ENCODE measurements at regions of chr3 and their contacts with region 1.

Region 1: GRCh38 chr3:155995525-155996351 is 124.6 kb upstream of the KCNAB1 start:
- DNase-seq: peak in 1 of 2 experiments; percentile 54
- H3K4me3 ChIP-seq: no peak overlapping the region
- H3K27ac ChIP-seq: no peak overlapping the region
- H3K4me1 ChIP-seq: no peaks in the 10 kb centered on the region
- H3K27me3 ChIP-seq: no peaks in the 10 kb centered on the region
- CTCF ChIP-seq: peak; percentile 80

Region 2: GRCh38 chr3:155646128-155646527 is 349.6 kb before region 1 on chr3:
- CTCF ChIA-PET with region 1: no interaction called
- POLR2A ChIA-PET with region 1: no interaction called
- intact Hi-C with region 1: no loop called
- DNase-seq: no peak
- H3K4me3 ChIP-seq: no peak overlapping the region
- H3K27ac ChIP-seq: no peak overlapping the region
- H3K4me1 ChIP-seq: no peaks in the 10 kb centered on the region
- H3K27me3 ChIP-seq: no peaks in the 10 kb centered on the region
- CTCF ChIP-seq: no peak

Region 3: GRCh38 chr3:155871746-155872158 is 124.0 kb before region 1 on chr3:
- CTCF ChIA-PET with region 1: no interaction called
- POLR2A ChIA-PET with region 1: no interaction called
- intact Hi-C with region 1: no loop called
- DNase-seq: no peak
- H3K4me3 ChIP-seq: peak overlapping the region; percentile 91
- H3K27ac ChIP-seq: peak overlapping the region; percentile 79; the same call in 1 of the 2 replicates
- H3K4me1 ChIP-seq: peaks cover 21% of the 10 kb centered on the region
- H3K27me3 ChIP-seq: no peaks in the 10 kb centered on the region
- CTCF ChIP-seq: no peak

Region 4: GRCh38 chr3:155912579-155913190 is 83.1 kb before region 1 on chr3:
- CTCF ChIA-PET with region 1: no interaction called
- POLR2A ChIA-PET with region 1: no interaction called
- intact Hi-C with region 1: no loop called
- DNase-seq: no peak
- H3K4me3 ChIP-seq: no peak overlapping the region
- H3K27ac ChIP-seq: 0 out of 2 replicates have a peak overlapping the region, but pooled peaks have one; percentile 1
- H3K4me1 ChIP-seq: no peaks in the 10 kb centered on the region
- H3K27me3 ChIP-seq: no peaks in the 10 kb centered on the region
- CTCF ChIP-seq: no peak

Region 5: GRCh38 chr3:157572559-157573270 is 1577.0 kb after region 1 on chr3:
- CTCF ChIA-PET with region 1: no interaction called
- POLR2A ChIA-PET with region 1: no interaction called
- intact Hi-C with region 1: loop called (anchors 5 kb)
- DNase-seq: peak in 1 of 2 experiments; percentile 17
- H3K4me3 ChIP-seq: no peak overlapping the region
- H3K27ac ChIP-seq: no peak overlapping the region
- H3K4me1 ChIP-seq: 0 out of 2 replicates have a peak, but pooled peaks cover 3% of the 10 kb centered on the region
- H3K27me3 ChIP-seq: no peaks in the 10 kb centered on the region
- CTCF ChIP-seq: peak; percentile 91

Measured in PC-9 (cell line).